Caco-2 (cell line): ENCODE measurements at regions of chr12 and their contacts with region 1.

Region 1: GRCh38 chr12:132083941-132084620 is 60.0 kb downstream of the DDX51 start:
- DNase-seq: peak; percentile 93 to 94
- H3K4me3 ChIP-seq: peak overlapping the region; percentile 99
- H3K4me3 Mint-ChIP-seq: peak overlapping the region; percentile 80
- H3K27ac Mint-ChIP-seq: peak overlapping the region; percentile 89
- H3K4me1 ChIP-seq: peaks cover 10% of the 10 kb centered on the region
- H3K4me1 Mint-ChIP-seq: peaks cover 8% of the 10 kb centered on the region
- H3K27me3 ChIP-seq: no peaks in the 10 kb centered on the region
- H3K27me3 Mint-ChIP-seq: no peaks in the 10 kb centered on the region
- CTCF ChIP-seq: no peak

Region 2: GRCh38 chr12:132144115-132144812 is 60.2 kb after region 1 on chr12 and contains the starts of genes DDX51 and NOC4L:
- CTCF ChIA-PET with region 1: no interaction called
- POLR2A ChIA-PET with region 1: no interaction called
- intact Hi-C with region 1: loop called (anchors 2 kb)
- DNase-seq: peak; percentile 92 to 96
- H3K4me3 ChIP-seq: peak within 1 kb of the TSS; percentile 90
- H3K4me3 Mint-ChIP-seq: peak within 1 kb of the TSS; percentile 85
- H3K27ac Mint-ChIP-seq: peak within 1 kb of the TSS; percentile 89
- H3K4me1 ChIP-seq: peaks cover 6% of the 10 kb centered on the region
- H3K4me1 Mint-ChIP-seq: no peaks in the 10 kb centered on the region
- H3K27me3 ChIP-seq: no peaks in the 10 kb centered on the region
- H3K27me3 Mint-ChIP-seq: no peaks in the 10 kb centered on the region
- CTCF ChIP-seq: no peak
- total RNA-seq, gene DDX51: 35.5 and 40.4 TPM in 2 replicates
- total RNA-seq, gene NOC4L: 39.6 and 40.7 TPM in 2 replicates